Activated CD8-positive, alpha-beta T cell treated with anti-CD3 and anti-CD28 coated beads for 36 hours (primary cell): ENCODE measurements at regions of chr13 and their contacts with region 1.

Region 1: DNA sequence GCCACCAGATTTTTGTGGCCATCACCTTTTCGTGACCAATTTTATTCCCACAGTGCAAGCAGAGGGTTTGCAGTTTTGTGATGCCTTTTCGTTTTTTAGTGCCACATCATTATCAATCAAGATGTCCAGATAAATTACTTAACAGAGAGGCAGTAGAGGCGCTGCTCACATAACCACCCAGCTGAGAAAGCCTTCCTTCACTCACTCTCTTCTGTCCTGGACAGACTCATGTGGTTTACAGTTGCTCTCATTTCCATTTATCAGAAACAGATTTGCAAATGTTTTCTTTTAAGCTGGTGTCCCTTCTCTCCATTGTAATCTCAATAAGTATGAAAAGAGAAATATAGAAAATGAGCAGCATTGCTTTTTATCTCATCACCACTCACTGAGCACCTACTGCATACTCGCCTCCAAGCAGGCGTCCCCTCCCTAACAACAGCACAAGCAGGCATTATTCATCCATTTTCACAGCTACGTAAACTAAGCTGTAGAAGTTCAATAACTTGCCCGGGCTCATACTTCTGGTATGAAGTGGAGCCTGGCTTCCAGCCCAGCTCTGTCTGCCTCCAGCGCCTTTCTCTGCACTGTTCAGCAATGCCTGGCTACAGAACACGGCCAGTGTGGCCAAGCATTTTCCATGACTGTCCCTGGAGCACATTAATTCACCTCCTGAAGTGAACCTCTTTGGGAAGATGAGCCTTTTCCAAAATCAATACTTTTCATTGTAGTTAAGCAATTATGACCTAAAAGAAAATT is 34.6 kb upstream of the KATNAL1 start:
- DNase-seq: no peak
- ATAC-seq: no peak
- H3K4me3 Mint-ChIP-seq: no peak overlapping the region
- H3K27ac Mint-ChIP-seq: no peak overlapping the region
- H3K4me1 Mint-ChIP-seq: peaks cover 24% of the 10 kb centered on the region
- H3K27me3 Mint-ChIP-seq: no peaks in the 10 kb centered on the region
- CTCF ChIP-seq: no peak

Region 2: DNA sequence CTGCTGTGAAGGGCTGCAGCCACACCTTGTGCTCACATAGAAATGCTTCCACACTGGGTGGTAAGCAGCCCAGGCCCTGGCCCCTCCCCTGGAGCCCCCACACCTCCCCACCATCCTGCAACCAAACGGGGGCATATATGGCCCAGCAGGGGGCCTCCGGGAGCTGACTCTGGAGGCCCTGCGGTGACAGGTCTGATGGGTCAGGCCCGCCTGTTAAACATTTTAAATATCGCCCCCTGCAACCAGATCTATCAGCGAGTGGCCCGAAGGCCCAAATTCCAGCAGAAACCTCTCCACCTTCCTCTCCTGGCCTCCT is 13.3 kb after region 1 on chr13:
- CTCF ChIA-PET with region 1: interaction called, 32 read pairs
- POLR2A ChIA-PET with region 1: interaction called, 4 read pairs
- intact Hi-C with region 1: no loop called
- DNase-seq: peak; percentile 73
- ATAC-seq: peak; percentile 96
- H3K4me3 Mint-ChIP-seq: no peak overlapping the region
- H3K27ac Mint-ChIP-seq: no peak overlapping the region
- H3K4me1 Mint-ChIP-seq: peaks cover 16% of the 10 kb centered on the region
- H3K27me3 Mint-ChIP-seq: no peaks in the 10 kb centered on the region
- CTCF ChIP-seq: peak; percentile 64